ENCODE measurements at regions of chr4 and their contacts with region 1.

Region 1: DNA sequence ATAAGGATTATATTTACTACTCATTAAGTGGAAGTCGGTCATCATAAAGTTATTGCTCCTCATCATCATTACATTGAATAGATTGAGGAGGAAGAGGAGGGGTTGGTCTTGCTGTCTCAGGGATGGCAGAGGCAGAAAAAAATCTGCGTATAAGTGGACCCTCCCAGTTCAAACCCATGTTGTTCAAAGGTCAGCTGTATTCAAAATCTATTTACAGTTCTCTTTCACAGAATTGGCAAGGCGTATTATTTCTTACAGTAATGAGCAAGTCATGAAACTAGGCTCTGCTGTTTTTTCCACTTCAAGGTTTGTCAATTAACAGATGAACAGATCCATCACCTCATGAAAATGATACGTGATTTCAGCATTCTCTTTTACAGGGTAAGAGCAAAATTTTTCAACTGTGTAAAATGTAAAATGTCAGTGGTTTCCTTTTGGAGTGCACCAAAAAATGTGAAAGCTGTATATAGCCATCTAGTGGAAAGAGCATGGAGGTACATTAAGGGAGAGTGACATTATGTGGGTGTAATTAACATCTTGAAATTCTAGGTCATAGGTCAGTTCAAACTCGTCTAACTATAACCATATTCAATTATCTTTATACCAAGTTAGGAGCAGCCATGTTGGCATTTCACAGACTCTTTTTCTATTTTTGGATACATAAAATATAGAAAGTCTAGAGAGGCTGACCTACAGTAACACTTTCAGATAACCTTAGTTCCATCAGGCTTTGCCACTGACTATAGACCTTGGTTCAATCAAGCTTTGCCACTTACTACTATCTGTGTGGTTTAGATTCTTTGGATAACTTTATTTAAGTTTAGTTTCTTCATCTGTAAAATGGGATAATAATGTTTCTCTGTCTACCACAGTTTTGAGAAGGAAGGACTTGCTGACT is 30.1 kb downstream of the NEIL3 start:
- DNase-seq: no peak
- ATAC-seq: peak; percentile 50 to 53

Region 2: DNA sequence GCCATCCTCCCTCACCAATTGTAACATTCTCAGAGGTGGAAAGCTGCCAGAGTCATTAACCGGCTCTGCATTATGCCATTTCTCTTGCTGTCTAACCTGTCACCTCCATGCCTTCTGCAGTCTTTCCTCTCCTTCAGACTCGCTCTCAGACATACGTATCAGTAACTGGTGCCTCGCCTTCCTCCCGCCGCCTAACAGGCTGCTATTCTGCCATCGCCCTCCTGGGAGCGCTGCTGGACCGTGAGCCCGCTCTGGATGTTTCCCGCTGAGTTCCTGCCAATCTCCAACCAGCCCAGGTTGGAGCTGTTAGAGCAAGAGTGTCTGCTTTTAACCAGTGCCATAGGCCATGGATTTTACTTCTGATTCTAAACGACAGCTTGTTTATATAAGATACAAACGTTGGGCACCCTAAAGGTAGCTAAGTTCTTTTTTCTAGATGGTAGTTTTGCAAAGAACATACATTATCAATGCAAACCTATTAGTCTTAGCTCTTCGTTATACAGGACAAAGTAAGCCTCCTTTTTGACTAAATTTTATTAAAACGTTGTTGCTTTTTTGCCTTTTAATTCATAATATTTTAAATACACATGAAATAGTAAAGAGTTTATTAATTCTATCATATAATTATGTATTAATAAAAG is 89.5 kb before region 1 on chr4:
- intact Hi-C with region 1: loop called (anchors 2 to 5 kb)
- DNase-seq: peak; percentile 61
- ATAC-seq: peak; percentile 91 to 95

Region 3: GRCh38 chr4:177484613-177485021 is 144.9 kb after region 1 on chr4:
- intact Hi-C with region 1: no loop called
- DNase-seq: no peak
- ATAC-seq: no peak

Measured in left cardiac atrium (tissue), 4 donors.